Right ventricle myocardium inferior (tissue), 1 donor: ENCODE measurements at regions of chr5 and their contacts with region 1.

Region 1: DNA sequence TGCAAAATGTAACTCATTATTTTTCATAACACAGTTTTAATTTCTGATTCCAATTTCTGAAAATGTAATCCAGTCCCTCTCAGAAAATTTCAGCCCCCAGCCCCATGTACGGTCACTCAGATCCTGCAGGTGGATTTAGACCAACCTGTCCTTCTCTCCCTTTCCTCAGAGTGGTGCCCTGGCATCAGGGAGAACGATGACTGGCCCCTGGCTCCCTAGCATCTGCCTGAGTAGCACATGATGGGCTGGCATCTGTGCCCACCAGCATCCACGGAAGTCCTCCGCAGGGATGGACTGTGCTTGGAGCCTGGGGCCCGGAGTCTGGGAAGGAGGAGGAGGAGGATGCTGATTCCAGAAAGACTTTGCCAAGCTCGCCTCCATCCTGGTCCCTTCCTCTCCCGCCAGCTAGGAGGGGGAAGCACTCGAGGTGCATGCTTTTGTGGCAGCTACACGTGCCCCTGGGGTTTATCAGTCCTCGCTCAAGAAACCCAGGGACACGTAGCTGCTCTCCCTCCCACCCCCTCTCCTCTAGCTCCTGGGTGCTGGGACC is 54.4 kb upstream of the RUFY1 start:
- DNase-seq: no peak
- ATAC-seq: no peak

Region 2: GRCh38 chr5:178793151-178793550 is 702.8 kb before region 1 on chr5:
- intact Hi-C with region 1: loop called (anchors 10 kb)
- DNase-seq: no peak
- ATAC-seq: no peak

Region 3: GRCh38 chr5:179294891-179295772 is 200.8 kb before region 1 on chr5:
- intact Hi-C with region 1: no loop called
- DNase-seq: peak; percentile 72
- ATAC-seq: peak; percentile 27